ENCODE measurements at regions of chr9 and their contacts with region 1.

Region 1: DNA sequence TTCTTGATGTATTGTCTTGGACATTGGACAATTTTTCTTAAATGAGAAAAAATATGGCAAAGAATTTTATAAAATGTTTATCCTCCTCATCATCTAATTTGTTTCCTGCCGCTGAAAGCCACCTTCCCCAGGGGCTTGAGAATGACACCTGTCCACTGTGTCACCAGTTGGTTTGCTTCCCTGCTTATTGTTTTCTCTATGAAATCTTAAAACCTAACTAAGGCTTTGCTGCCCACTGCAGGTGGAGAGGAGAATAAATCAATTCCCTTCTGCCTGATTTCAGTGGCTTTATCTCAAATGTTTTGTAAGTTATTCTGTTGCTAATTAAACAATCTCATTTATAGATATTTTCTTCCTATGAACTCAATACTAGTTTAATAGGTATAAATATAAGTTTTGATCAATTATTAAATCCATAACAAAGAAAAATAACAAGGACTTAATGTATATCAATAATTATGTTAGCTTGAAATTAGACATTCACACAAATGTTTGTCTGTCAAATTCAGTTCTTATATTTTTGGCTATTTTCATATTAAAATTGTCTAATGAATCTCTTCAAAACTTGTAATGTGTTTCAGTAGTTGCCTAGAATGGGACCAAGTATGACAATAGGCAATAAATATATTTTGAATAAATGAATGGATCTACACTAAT is 822.5 kb downstream of the PTPRD start:
- DNase-seq: peak; percentile 89
- H3K4me3 ChIP-seq: no peak overlapping the region
- H3K27ac ChIP-seq: peak overlapping the region; percentile 31
- H3K4me1 ChIP-seq: peaks cover 48% of the 10 kb centered on the region
- CTCF ChIP-seq: peak; percentile 98

Region 2: DNA sequence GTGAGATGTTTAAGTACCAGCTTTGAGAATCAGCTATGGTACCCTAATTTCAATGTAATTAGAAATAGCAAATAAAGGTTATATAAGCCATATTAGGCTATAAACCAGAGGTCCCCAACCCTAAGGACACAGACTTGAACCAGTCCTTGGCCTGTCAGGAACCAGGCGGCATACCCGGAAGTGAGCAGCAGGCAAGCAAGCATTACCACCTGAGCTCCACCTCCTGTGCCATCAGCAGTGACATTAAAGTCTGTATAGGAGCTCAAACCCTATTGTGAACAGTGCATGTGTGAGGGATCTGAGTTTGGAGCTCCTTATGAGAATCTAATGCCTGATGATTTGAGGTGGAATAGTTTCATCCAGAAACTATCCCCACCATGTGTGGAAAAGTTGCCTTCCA is 187.0 kb before region 1 on chr9:
- CTCF ChIA-PET with region 1: interaction called, 36 read pairs
- POLR2A ChIA-PET with region 1: interaction called, 135 read pairs
- intact Hi-C with region 1: loop called (anchors 1 kb)
- DNase-seq: no peak
- H3K4me3 ChIP-seq: no peak overlapping the region
- H3K27ac ChIP-seq: no peak overlapping the region
- H3K4me1 ChIP-seq: peaks cover 16% of the 10 kb centered on the region
- CTCF ChIP-seq: no peak

Region 3: DNA sequence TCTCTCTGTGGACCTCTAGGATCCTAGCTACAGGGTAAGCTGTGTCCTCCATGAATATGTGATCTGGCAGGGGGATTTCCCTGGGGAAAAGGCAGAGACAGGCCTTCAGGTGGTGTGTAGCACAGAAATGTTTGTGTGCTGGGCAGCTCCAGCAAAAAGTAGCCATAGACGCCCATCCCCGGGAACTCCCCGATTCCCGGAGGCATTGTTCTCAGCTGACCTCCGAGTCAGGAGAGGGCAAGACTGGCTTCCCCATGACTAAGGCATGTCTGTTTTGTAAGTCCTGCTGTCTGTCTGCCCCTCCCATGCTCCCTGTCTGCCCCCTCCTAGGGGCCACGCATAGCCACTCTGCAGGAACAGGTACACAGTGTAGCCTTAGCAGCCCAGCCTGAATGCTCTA is 12.1 kb before region 1 on chr9:
- CTCF ChIA-PET with region 1: no interaction called
- POLR2A ChIA-PET with region 1: interaction called, 11 read pairs
- intact Hi-C with region 1: no loop called
- DNase-seq: no peak
- H3K4me3 ChIP-seq: no peak overlapping the region
- H3K27ac ChIP-seq: no peak overlapping the region
- H3K4me1 ChIP-seq: no peaks in the 10 kb centered on the region
- CTCF ChIP-seq: no peak

Region 4: DNA sequence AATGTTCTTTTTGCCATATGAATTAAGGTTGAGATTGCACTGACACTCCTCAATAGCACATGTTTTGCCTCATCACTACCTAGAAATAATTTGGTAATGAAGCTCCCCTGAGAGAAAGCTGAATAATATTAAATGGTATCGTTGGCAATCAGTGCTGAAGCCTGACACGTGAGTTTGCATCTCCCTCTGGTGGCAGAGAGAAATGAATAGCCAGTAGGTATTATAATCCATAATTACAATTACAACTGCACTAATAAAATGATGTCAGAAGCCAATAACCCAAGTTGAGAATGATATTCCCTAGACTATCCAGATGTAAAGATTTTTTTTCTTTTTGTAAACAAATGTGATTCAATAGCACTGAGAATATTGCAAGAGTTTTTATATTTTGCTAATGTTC is 122.1 kb after region 1 on chr9:
- CTCF ChIA-PET with region 1: interaction called, 7 read pairs
- POLR2A ChIA-PET with region 1: interaction called, 26 read pairs
- intact Hi-C with region 1: loop called (anchors 1 kb)
- DNase-seq: peak; percentile 46
- H3K4me3 ChIP-seq: no peak overlapping the region
- H3K27ac ChIP-seq: no peak overlapping the region
- H3K4me1 ChIP-seq: no peaks in the 10 kb centered on the region
- CTCF ChIP-seq: peak; percentile 83

Measured in OCI-LY7 (cell line).